ENCODE measurements at regions of chr2 and their contacts with region 1.

Region 1: GRCh38 chr2:162123806-162124758 is 28.0 kb downstream of the GCG start:
- DNase-seq: peak in 2 of 5 donors; percentile 43 to 57
- H3K4me3 ChIP-seq: no peak overlapping the region
- H3K4me3 Mint-ChIP-seq: no peak overlapping the region
- H3K27ac ChIP-seq: no peak overlapping the region
- H3K27ac Mint-ChIP-seq: no peak overlapping the region
- H3K4me1 ChIP-seq: no peaks in the 10 kb centered on the region
- H3K4me1 Mint-ChIP-seq: peaks cover 2 to 9% (median 6%) of the 10 kb centered on the region in 3 donors
- H3K27me3 ChIP-seq: no peaks in the 10 kb centered on the region
- H3K27me3 Mint-ChIP-seq: no peaks in the 10 kb centered on the region

Region 2: GRCh38 chr2:161586517-161587167 is 537.4 kb before region 1 on chr2:
- CTCF ChIA-PET with region 1: interaction called, 17 read pairs
- POLR2A ChIA-PET with region 1: no interaction called
- DNase-seq: peak in 2 of 5 donors; percentile 7 to 11
- H3K4me3 ChIP-seq: no peak overlapping the region
- H3K4me3 Mint-ChIP-seq: no peak overlapping the region
- H3K27ac ChIP-seq: no peak overlapping the region
- H3K27ac Mint-ChIP-seq: no peak overlapping the region
- H3K4me1 ChIP-seq: no peaks in the 10 kb centered on the region
- H3K4me1 Mint-ChIP-seq: no peaks in the 10 kb centered on the region
- H3K27me3 ChIP-seq: no peaks in the 10 kb centered on the region
- H3K27me3 Mint-ChIP-seq: no peaks in the 10 kb centered on the region

Region 3: DNA sequence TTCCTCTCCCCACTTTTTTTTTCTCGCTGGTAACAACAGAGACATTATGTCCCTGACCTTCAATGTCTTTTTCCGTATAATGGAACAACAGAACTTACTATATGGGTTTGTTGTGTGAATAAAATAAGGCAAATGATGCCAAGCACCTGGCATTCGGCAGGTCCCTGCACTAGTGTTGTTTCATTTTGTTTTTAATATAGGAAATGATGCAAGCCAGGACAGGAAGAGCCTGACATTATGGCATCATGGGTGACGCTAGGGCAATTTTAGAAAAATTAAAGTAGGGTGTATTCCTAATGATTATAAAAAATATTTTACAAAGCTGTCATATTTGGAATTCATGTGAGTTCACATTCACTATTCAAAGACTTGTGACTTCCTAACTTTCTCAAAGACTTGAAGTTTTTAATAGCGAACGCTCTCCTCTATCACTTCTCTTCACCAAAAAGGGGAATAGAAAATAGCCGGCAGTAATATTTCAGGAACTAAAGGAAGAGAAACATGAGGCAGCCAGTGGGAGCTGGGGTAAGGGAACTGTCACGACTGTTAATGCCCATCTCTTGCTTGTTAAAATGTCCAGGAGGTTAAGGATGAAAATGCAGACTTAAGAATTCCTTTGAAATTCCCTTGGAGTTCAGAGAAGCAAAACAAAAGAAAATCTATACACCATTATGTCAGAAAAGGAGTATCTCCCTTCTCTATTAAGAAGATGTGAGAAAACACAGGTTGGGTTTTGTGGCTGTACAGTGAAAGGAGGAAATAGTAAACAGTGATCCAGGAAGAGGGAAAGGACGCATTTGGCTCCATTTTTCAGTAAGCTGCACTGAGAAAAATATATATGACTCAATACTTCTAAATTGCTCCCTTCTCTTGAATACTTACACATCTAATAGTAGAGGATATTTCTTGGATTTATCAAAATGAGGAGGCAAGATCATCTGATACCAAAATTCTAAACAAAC is 110.3 kb before region 1 on chr2:
- CTCF ChIA-PET with region 1: interaction called, 12 read pairs
- POLR2A ChIA-PET with region 1: no interaction called
- DNase-seq: peak in 1 of 5 donors; percentile 47
- H3K4me3 ChIP-seq: peak overlapping the region; percentile 19
- H3K4me3 Mint-ChIP-seq: peak overlapping the region in 6 of 7 donors; percentile 24 to 83 (median 73)
- H3K27ac ChIP-seq: peak overlapping the region; percentile 13
- H3K27ac Mint-ChIP-seq: peak overlapping the region; percentile 93 to 100 (median 96)
- H3K4me1 ChIP-seq: peaks cover 68% of the 10 kb centered on the region
- H3K4me1 Mint-ChIP-seq: peaks cover 53 to 76% (median 62%) of the 10 kb centered on the region in 3 donors
- H3K27me3 ChIP-seq: no peaks in the 10 kb centered on the region
- H3K27me3 Mint-ChIP-seq: no peaks in the 10 kb centered on the region

Measured in CD8-positive, alpha-beta memory T cell (primary cell).